ENCODE measurements at regions of chrX and their contacts with region 1.

Region 1: GRCh38 chrX:65667503-65668376 is at the start of gene MSN:
- DNase-seq: peak; percentile 59 to 86
- H3K4me3 ChIP-seq: peak within 1 kb of the TSS; percentile 79
- H3K4me1 ChIP-seq: peaks cover 20% of the 10 kb centered on the region
- H3K27me3 ChIP-seq: no peaks in the 10 kb centered on the region

Region 2: GRCh38 chrX:65534450-65535292 is 133.1 kb before region 1 on chrX and contains the start of gene LAS1L:
- in situ Hi-C with region 1: loop called (anchors 10 kb)
- DNase-seq: peak; percentile 90 to 96
- H3K4me3 ChIP-seq: peak within 1 kb of the TSS; percentile 80
- H3K4me1 ChIP-seq: no peaks in the 10 kb centered on the region; the same call in 1 of the 2 replicates
- H3K27me3 ChIP-seq: no peaks in the 10 kb centered on the region

Region 3: GRCh38 chrX:65841263-65841662 is 173.5 kb after region 1 on chrX:
- in situ Hi-C with region 1: no loop called
- DNase-seq: no peak
- H3K4me3 ChIP-seq: no peak overlapping the region
- H3K4me1 ChIP-seq: no peaks in the 10 kb centered on the region
- H3K27me3 ChIP-seq: no peaks in the 10 kb centered on the region

Region 4: DNA sequence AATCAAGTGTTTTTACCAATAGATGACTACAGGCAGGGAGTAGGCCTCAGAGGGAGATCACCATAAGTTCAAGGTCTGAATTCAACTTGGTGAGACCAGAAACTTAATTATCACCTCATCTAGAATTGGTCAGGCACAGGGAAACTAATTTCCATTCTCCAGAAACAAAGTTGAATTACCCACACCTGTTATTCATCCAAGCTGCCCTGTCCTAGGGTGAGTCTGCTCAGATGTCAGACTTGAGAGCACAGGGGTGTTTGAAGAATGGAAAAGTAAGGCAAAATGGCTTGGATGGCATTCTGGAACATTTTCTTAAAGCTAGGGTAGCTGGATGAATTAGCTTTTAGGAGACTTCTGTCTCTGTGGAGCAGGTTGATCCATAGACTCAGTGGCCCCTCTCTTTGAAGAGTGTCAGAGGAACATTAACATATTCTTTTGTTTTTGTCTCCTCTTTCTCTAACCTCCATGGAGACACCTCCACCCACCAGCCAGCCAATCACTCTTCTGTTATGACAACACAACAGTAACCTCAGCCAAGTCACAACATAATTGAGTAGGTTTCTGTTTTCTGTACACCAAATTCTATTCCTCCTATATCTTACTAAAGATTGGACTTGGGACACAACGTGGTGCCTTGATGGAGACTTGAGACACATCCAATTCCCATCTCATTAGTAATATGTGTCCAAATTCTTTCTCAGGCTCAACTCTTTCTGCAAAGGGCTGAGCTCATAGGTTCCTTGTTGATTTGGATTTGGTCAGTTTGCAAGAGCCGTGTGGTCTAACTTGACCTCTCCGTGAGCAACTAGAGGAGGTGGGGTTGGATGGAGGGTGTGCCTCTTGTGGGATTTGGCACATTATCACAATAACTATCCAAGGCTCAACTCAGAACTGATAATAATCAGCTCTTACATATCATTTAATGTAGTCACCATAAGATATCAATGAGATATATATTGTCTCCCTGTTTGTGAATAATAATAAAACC is 327.1 kb after region 1 on chrX:
- in situ Hi-C with region 1: no loop called
- DNase-seq: no peak
- H3K4me3 ChIP-seq: no peak overlapping the region
- H3K4me1 ChIP-seq: no peaks in the 10 kb centered on the region
- H3K27me3 ChIP-seq: no peaks in the 10 kb centered on the region

Region 5: GRCh38 chrX:66622209-66622608 is 954.5 kb after region 1 on chrX:
- in situ Hi-C with region 1: no loop called
- DNase-seq: no peak
- H3K4me3 ChIP-seq: no peak overlapping the region
- H3K4me1 ChIP-seq: no peaks in the 10 kb centered on the region
- H3K27me3 ChIP-seq: no peaks in the 10 kb centered on the region